ENCODE measurements at regions of chr19 and their contacts with region 1.

Region 1: GRCh38 chr19:45405435-45406225 is 761 bp upstream of the PPP1R13L start:
- DNase-seq: peak; percentile 76
- ATAC-seq: peak; percentile 65
- H3K4me3 Mint-ChIP-seq: peak overlapping the region; percentile 96
- H3K27ac Mint-ChIP-seq: peak overlapping the region; percentile 95
- H3K4me1 Mint-ChIP-seq: peaks cover 43% of the 10 kb centered on the region
- H3K27me3 Mint-ChIP-seq: peaks cover 12% of the 10 kb centered on the region
- CTCF ChIP-seq: no peak

Region 2: DNA sequence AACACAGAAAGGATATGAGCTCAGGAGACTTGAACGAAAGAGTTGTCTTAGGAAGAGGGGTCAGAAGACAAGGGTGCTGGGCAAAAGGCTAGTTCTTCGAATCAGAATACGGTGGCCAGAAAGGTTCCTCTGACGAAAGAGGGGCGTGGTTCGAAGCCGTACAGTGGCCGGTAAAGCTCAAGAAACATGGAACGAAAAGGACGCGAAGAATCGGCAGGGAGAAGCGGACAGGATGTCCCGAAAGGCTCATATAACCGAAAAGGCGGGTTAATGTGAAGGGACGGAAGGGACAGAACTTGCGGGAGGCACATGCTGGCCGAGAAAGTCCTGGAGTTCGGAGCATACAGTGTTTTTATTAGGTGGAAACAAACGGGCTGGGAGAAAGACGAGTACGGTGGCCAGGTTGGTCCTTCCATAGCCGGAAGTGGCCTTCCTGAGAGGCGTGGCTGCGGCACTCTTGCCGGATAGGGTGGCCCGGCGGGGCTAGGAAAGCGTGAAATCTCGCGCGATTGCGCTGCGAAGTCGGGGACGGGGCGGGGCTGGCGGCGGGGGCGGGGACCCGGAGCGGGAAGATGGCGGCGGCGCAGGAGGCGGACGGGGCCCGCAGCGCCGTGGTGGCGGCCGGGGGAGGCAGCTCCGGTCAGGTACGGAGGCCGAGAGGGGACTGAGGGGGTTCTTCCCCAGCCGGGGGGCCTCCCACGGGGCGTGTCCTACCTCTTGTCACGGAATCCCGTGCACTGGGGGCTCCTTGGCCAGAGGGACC is 450.6 kb before region 1 on chr19 and contains the start of gene CLPTM1:
- CTCF ChIA-PET with region 1: no interaction called
- POLR2A ChIA-PET with region 1: no interaction called
- intact Hi-C with region 1: loop called (anchors 5 kb)
- DNase-seq: peak; percentile 85
- ATAC-seq: peak; percentile 89
- H3K4me3 Mint-ChIP-seq: peak within 1 kb of the TSS; percentile 97
- H3K27ac Mint-ChIP-seq: peak within 1 kb of the TSS; percentile 97
- H3K4me1 Mint-ChIP-seq: peaks cover 57% of the 10 kb centered on the region
- H3K27me3 Mint-ChIP-seq: no peaks in the 10 kb centered on the region
- CTCF ChIP-seq: no peak
- total RNA-seq, gene CLPTM1: 87.0 and 92.1 TPM in 2 replicates

Region 3: DNA sequence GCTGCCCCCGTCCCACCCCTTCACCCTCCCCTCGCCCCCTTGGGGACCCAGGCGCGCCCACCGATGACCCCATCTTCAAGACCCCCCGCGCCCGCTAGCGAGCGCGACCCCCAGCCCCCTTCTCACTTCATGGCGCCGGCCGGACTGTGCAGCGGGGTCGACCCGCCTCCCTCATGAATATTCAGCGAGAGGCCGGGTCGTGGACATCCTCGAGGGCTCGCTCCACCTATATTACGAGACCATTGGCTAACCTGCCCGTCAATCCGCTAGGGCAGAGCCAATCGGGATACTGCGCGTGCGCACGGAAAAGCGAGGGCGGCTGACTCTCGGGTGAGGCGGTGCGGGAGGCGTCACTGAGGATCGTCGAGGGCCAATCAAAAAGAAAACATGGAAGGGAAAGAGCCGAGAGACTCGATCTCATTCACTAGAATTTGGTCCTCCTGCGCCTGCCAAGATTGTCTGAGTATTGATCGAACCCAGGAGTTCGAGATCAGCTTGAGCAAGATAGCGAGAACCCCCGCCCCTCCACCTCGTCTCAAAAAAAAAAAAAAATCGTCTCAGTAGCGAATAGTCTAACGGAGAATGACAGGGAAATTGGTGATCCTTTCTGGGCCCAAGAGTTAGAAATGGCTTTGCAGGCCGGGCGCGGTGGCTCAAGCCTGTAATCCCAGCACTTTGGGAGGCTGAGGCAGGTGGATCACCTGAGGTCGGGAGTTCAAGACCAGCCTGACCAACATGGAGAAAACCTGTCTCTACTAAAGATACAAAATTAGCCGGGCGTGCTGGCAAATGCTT is 35.0 kb before region 1 on chr19 and contains the start of gene ERCC2:
- CTCF ChIA-PET with region 1: no interaction called
- POLR2A ChIA-PET with region 1: no interaction called
- intact Hi-C with region 1: loop called (anchors 1 kb)
- DNase-seq: peak; percentile 98
- ATAC-seq: peak; percentile 97
- H3K4me3 Mint-ChIP-seq: peak within 1 kb of the TSS; percentile 95
- H3K27ac Mint-ChIP-seq: peak within 1 kb of the TSS; percentile 99
- H3K4me1 Mint-ChIP-seq: peaks cover 14% of the 10 kb centered on the region
- H3K27me3 Mint-ChIP-seq: no peaks in the 10 kb centered on the region
- CTCF ChIP-seq: no peak
- total RNA-seq, gene ERCC2: 29.8 and 31.5 TPM in 2 replicates

Region 4: GRCh38 chr19:45439569-45440254 is 34.1 kb after region 1 on chr19:
- CTCF ChIA-PET with region 1: interaction called, 21 read pairs
- POLR2A ChIA-PET with region 1: interaction called, 6 read pairs
- intact Hi-C with region 1: loop called (anchors 1 kb)
- DNase-seq: peak; percentile 94
- ATAC-seq: peak; percentile 40
- H3K4me3 Mint-ChIP-seq: peak overlapping the region; percentile 72
- H3K27ac Mint-ChIP-seq: peak overlapping the region; percentile 75
- H3K4me1 Mint-ChIP-seq: peaks cover 37% of the 10 kb centered on the region
- H3K27me3 Mint-ChIP-seq: no peaks in the 10 kb centered on the region
- CTCF ChIP-seq: peak; percentile 98

Region 5: DNA sequence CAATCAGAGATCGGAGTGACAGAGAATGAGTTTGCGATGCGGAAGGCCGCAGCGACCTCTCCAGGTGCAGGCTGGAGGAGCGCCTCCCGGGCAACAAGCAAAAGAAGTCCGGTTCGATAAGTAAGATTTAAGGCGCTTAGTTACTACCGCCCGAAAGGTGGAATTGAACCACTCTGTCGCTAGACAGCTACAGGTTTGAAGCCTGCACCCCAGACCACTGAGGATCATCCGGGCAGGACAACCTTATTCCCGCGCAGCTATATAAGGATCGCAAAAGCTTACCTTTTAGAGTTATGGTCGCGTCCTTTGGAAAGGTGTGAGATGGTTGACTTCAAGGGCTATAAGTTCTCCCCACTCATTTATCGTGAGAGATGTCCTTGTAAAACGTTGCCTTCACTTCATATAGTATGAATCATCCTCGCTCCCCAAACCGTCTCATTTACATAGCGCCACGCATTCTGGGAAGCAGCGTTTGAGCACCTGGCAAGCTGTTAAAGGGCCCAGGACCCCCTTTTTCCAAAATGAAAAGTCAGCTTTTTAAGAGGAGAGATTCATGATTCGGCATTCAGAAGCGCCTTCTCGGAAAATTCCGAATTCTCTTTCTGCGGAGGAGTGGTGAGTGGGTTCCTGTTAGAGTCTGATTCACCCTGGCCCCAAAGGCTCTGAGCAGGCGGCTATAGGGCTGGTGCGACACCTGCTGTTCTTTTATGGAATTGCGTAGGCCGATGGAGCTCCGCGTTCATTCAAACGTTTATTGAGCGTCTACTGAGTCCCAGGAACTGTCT is 73.0 kb after region 1 on chr19:
- CTCF ChIA-PET with region 1: interaction called, 52 read pairs
- POLR2A ChIA-PET with region 1: interaction called, 12 read pairs
- intact Hi-C with region 1: loop called (anchors 1 kb)
- DNase-seq: peak; percentile 79
- ATAC-seq: peak; percentile 81
- H3K4me3 Mint-ChIP-seq: peak overlapping the region; percentile 89
- H3K27ac Mint-ChIP-seq: peak overlapping the region; percentile 97
- H3K4me1 Mint-ChIP-seq: peaks cover 21% of the 10 kb centered on the region
- H3K27me3 Mint-ChIP-seq: peaks cover 14% of the 10 kb centered on the region
- CTCF ChIP-seq: peak; percentile 72

Region 6: DNA sequence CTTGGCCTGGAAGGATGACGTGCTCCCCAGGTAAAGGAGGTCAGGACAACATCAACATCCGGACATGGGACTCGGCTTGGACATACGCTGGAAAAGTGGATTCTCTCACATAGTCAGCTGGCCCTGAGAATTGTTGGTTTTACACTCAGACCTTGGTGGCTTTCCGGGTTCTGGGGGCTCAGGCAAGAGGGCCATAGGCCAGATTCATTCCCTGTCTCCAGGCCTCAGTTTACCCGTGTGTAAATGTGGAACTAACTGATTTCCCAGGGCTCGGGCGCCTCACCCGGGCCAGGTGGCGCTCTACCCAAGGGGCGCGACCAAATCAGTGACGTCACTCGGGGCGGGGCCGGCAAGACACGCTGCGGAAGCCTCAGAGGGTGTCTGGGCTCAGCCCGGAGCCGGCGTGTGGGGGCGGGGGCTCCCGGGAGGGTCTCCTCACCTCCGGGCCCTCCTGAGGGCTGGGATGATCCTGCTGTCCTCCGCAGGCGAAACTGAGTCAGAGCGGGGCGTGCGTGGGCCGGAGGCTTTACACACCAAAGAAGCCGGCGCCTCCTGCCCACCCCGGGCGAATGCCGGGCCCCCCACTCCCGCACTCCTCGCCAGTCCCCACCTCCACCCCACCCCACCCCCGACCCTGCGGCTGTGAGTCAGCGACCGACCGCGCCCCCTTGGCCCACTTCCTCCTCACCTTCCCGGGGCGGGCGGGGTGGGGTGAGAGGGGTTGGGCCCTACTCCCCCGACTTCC is 100.8 kb after region 1 on chr19:
- CTCF ChIA-PET with region 1: no interaction called
- POLR2A ChIA-PET with region 1: no interaction called
- intact Hi-C with region 1: loop called (anchors 1 kb)
- DNase-seq: peak; percentile 99
- ATAC-seq: peak; percentile 72
- H3K4me3 Mint-ChIP-seq: peak overlapping the region; percentile 92
- H3K27ac Mint-ChIP-seq: peak overlapping the region; percentile 97
- H3K4me1 Mint-ChIP-seq: peaks cover 54% of the 10 kb centered on the region
- H3K27me3 Mint-ChIP-seq: no peaks in the 10 kb centered on the region
- CTCF ChIP-seq: no peak